ENCODE measurements at regions of chr10 and their contacts with region 1.

Region 1: DNA sequence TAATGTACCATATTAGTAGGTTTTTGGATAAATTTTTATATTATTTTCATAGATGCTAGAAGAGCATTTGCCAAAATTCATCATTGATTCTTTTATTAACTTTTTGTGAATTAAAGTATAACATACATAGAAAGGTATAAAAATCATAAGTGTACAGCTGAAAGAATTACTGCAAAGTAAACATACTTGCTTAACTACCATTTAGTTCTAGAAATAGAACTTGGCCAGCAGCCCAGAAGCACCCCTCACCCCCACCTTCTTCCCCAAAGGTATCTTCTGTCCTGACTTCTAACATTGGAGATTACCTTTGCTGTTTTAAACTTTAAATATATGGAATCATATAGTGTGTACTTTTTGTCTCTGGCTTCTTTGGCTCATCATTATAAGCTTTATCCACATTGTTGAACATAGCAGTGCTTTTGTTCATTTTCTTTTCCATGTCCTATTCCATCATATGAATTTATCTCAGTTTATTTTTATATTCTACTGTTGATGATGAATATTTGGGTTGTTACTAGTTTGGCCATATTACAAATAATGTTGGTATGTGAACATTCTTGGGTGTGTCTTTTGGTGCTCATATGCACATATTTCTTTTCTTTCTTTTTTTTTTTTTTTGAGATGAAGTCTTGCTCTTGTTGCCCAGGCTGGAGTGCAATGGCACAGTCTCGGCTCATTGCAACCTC is 142.8 kb downstream of the ADK start:
- DNase-seq: peak in 1 of 2 donors; percentile 26
- ATAC-seq: peak in 4 of 8 donors; percentile 29 to 71 (median 52)
- H3K4me3 ChIP-seq: no peak overlapping the region
- H3K27ac ChIP-seq: peak overlapping the region in 6 of 10 donors; percentile 8 to 71 (median 36)
- H3K4me1 ChIP-seq: peaks cover 0 to 35% (median 11%) of the 10 kb centered on the region in 9 donors
- H3K27me3 ChIP-seq: no peaks in the 10 kb centered on the region
- CTCF ChIP-seq: no peak

Region 2: DNA sequence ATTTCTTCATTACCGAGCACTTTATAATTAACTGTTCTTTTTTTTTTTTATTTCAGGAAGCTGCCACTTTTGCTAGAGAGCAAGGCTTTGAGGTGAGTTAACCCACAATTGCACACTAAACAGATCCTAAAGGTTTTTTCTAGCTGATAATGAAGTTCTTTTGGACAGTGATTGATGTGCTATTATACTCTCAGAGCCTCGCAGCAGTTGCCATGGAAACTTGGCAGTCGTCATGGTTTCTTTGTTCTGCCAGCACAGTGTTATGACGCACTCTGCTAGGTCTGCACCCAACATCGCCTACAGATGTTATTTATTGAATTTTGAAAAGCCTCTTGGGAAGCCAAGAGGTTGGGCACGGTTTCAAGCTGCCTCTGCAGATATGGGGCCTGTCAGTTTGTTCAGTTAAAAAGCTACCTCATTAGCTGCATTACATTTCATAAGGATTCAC is 295.4 kb after region 1 on chr10:
- intact Hi-C with region 1: loop called in 1 of 10 experiments (anchors 5 kb)
- DNase-seq: peak; percentile 79 to 94
- ATAC-seq: peak; percentile 89 to 97 (median 94)
- H3K4me3 ChIP-seq: no peak overlapping the region
- H3K27ac ChIP-seq: peak overlapping the region in 9 of 10 donors; percentile 13 to 72 (median 53)
- H3K4me1 ChIP-seq: peaks cover 9 to 91% (median 62%) of the 10 kb centered on the region in 9 donors
- H3K27me3 ChIP-seq: no peaks in the 10 kb centered on the region
- CTCF ChIP-seq: no peak

Measured in heart right ventricle (tissue), 16 donors.